GM12878 (cell line): ENCODE measurements at regions of chr1 and their contacts with region 1.

Region 1: DNA sequence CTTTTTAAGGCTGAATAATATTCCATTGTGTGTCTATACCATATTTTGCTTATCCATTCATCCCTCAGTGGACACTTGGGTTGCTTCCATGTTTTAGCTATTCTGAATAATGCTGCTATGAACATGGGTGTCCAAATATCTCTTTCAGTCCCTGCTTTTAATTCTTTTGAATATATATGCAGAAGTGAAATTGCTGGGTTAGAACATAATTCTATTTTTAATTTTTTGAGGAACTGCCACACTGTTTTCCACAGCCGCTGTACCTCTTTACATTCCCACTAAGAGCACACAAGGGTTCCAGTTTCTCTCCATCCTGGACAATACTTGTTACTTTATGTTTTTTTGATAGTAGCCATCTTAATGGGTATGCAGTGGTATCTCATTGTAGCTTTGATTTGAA is 65.6 kb downstream of the RIMS3 start:
- DNase-seq: no peak
- ATAC-seq: no peak
- H3K4me3 ChIP-seq: no peak overlapping the region
- H3K27ac ChIP-seq: no peak overlapping the region
- H3K4me1 ChIP-seq: no peaks in the 10 kb centered on the region
- H3K27me3 ChIP-seq: no peaks in the 10 kb centered on the region; a peak in 1 of 4 replicates
- CTCF ChIP-seq: no peak
- EP300 ChIP-seq: no peak
- POLR2A ChIP-seq: no peak
- RAD21 ChIP-seq: no peak

Region 2: GRCh38 chr1:40676501-40676900 is 76.6 kb after region 1 on chr1:
- CTCF ChIA-PET with region 1: no interaction called
- POLR2A ChIA-PET with region 1: interaction called, 10 read pairs
- RAD21 ChIA-PET with region 1: no interaction called
- SMC1A ChIA-PET with region 1: no interaction called
- in situ Hi-C with region 1: no loop called
- intact Hi-C with region 1: no loop called
- DNase-seq: no peak
- ATAC-seq: no peak
- H3K4me3 ChIP-seq: no peak overlapping the region
- H3K27ac ChIP-seq: no peak overlapping the region
- H3K4me1 ChIP-seq: no peaks in the 10 kb centered on the region
- H3K27me3 ChIP-seq: no peaks in the 10 kb centered on the region
- CTCF ChIP-seq: no peak
- EP300 ChIP-seq: no peak
- POLR2A ChIP-seq: no peak
- RAD21 ChIP-seq: no peak